ENCODE measurements at regions of chr19 and their contacts with region 1.

Region 1: DNA sequence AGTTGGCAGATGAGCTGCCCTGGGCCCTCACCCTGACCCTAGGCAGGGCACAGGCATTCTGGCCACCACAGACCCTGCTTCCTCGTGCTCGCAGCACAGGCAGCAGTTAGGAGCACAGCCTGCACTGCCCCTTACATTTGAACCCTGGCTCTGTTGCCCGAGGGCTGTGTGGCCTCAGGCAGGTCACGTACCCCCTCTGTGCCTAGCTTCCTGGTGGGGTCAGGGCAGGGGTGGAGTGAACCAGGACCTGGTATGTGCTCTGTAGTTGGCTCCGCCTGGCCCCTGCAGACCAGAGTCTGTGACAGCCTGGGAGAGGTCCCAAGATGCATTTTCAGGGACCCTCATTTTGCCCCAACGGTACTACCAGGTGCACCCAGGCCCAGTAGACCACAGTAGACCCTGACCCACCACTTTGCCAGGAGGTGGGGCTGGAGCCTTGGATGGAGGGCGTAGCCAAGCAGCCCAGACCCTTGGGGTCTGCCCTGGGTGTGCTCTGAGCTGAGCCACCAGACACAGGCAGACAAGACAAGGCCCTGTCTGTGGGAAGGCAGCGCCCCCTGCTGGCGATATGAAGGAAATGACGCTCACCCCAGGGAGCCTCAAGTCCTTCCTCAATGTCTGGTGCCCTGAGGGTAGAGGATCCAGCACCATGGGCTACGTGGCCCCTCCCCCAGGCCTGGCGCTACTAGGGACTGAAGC is 9.1 kb downstream of the LYL1 start:
- DNase-seq: no peak
- H3K4me3 ChIP-seq: no peak overlapping the region
- CTCF ChIP-seq: peak; percentile 90

Region 2: DNA sequence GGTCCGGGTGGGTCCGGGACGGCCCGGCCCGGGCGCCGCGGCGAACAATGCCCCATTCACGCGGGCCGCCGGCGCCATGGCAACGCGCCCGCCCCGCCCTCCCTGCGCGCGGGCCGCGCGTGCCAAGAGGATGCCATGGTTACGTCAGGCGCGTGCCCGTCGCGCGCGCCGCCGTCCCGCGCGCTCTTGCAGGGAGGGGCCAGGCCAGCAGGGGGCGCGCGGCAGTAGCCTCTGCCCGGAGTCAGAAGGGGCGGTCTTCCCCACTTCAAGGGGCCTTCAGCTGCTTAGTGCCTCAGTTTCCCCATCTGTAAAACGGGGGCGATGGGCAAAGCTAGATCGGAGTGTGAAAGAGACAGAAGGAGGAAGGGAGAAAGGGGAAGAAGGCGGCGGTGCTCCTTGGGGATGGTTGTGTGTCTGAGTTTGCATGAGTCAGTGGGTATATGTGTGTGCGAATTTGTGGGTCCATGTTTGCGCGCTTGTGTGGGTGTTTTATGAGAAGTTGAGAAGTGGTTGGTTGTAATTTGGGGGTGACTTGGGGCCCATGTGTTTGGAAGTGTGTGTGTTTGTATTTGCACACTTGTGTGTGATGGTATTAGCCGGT is 109.9 kb before region 1 on chr19:
- CTCF ChIA-PET with region 1: interaction called, 573 read pairs
- POLR2A ChIA-PET with region 1: no interaction called
- DNase-seq: no peak
- H3K4me3 ChIP-seq: peak overlapping the region; percentile 52
- CTCF ChIP-seq: peak; percentile 87

Region 3: DNA sequence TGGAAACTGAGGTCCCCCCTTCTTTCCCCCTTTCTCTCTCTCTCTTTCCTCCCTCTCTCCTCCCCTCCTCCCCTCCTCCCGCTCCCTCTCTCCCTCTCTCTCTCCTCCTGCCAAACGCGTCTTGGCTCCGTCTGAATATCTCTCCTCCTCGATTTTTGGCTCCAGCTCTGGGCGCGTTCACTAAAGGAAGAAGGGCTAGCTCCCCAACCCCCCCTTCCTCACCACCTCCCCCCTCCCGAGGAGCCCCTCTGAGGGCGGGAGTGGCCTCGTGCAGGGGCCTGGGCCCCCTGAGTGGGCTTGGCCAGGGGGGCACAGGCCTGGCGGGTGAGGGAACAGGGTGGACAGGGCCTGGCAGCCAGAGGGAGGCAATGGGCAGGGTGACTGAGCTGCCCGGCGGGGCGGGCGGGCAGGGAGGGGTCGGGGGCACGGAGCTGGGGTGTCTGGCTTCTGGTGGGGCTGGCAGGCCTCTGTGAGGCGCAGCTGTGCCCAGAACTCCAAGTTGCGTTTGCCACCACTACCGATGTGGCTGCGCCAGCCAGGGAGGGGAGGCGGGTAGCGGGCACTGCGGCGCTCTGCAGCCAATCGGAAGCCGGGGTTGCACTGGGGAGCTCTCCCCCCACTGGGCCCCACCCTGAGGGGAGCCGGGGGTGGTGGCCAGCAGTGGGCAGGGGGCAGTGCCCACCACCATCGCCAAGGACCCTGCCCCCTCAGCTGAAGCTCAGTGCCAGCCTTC is 91.2 kb before region 1 on chr19:
- CTCF ChIA-PET with region 1: interaction called, 10 read pairs
- POLR2A ChIA-PET with region 1: interaction called, 3 read pairs
- DNase-seq: no peak
- H3K4me3 ChIP-seq: no peak overlapping the region
- CTCF ChIP-seq: no peak

Region 4: DNA sequence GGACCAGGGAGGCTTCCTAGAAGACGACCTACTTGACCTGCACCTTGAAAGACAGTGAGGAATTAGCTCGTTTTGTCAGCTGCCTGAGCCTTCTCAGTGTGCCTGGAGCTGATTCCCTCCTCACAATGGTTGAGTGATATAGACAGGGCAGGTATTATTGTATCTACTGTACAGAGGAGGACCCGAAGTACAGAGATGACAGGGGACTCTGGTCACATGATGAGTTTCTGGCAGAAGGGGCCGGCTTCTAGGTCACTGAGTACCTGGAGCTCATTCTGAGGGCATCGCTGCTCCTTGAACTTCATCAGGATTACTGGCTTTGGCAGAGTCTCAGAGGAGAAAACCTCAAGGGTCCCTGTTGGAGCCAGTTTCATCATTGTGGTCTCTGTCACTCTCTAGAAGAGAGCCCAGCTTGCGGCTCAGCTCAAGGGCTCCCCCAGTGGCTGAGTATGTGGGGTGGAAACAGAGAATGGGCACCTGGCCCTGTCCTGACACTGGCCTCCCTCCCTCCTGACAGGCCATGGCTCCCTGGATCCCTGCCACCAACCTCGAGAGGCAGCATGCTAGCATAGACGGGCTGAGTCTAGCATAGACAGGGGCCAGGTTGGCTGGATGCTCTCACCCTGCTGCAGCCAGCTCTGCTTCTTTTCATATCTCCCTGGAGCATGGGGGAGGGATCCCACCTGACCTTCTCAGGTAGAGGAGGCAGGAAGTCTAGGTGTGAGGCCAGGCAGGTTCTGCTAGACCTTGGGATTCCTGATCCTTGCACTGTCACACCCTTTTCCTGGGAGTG is 59.5 kb before region 1 on chr19:
- CTCF ChIA-PET with region 1: interaction called, 36 read pairs
- POLR2A ChIA-PET with region 1: no interaction called
- DNase-seq: no peak
- H3K4me3 ChIP-seq: no peak overlapping the region
- CTCF ChIP-seq: peak; percentile 67

Region 5: GRCh38 chr19:13060964-13061927 is 32.3 kb before region 1 on chr19:
- CTCF ChIA-PET with region 1: interaction called, 550 read pairs
- POLR2A ChIA-PET with region 1: no interaction called
- DNase-seq: no peak
- H3K4me3 ChIP-seq: peak overlapping the region; percentile 36
- CTCF ChIP-seq: peak; percentile 98

Region 6: GRCh38 chr19:13082192-13083007 is 11.2 kb before region 1 on chr19:
- CTCF ChIA-PET with region 1: interaction called, 111 read pairs
- POLR2A ChIA-PET with region 1: no interaction called
- DNase-seq: no peak
- H3K4me3 ChIP-seq: no peak overlapping the region
- CTCF ChIP-seq: peak; percentile 58